Activated CD8-positive, alpha-beta T cell treated with anti-CD3 and anti-CD28 coated beads for 36 hours (primary cell): ENCODE measurements at regions of chr10 and their contacts with region 1.

Region 1: GRCh38 chr10:73495884-73496674 is at the start of gene PPP3CB:
- DNase-seq: peak; percentile 96
- ATAC-seq: peak; percentile 84
- H3K4me3 Mint-ChIP-seq: peak within 1 kb of the TSS; percentile 86
- H3K27ac Mint-ChIP-seq: peak within 1 kb of the TSS; percentile 97
- H3K4me1 Mint-ChIP-seq: peaks cover 41% of the 10 kb centered on the region
- H3K27me3 Mint-ChIP-seq: no peaks in the 10 kb centered on the region
- CTCF ChIP-seq: no peak
- total RNA-seq, gene PPP3CB: 35.8 to 36.5 TPM

Region 2: GRCh38 chr10:72344932-72345331 is 1151.1 kb before region 1 on chr10:
- CTCF ChIA-PET with region 1: no interaction called
- POLR2A ChIA-PET with region 1: no interaction called
- intact Hi-C with region 1: no loop called
- DNase-seq: peak; percentile 64
- ATAC-seq: peak; percentile 60
- H3K4me3 Mint-ChIP-seq: no peak overlapping the region
- H3K27ac Mint-ChIP-seq: peak overlapping the region; percentile 76
- H3K4me1 Mint-ChIP-seq: peaks cover 26% of the 10 kb centered on the region
- H3K27me3 Mint-ChIP-seq: no peaks in the 10 kb centered on the region
- CTCF ChIP-seq: no peak

Region 3: GRCh38 chr10:73182568-73182967 is 313.5 kb before region 1 on chr10:
- CTCF ChIA-PET with region 1: no interaction called
- POLR2A ChIA-PET with region 1: no interaction called
- intact Hi-C with region 1: no loop called
- DNase-seq: no peak
- ATAC-seq: no peak
- H3K4me3 Mint-ChIP-seq: no peak overlapping the region
- H3K27ac Mint-ChIP-seq: no peak overlapping the region
- H3K4me1 Mint-ChIP-seq: no peaks in the 10 kb centered on the region
- H3K27me3 Mint-ChIP-seq: no peaks in the 10 kb centered on the region
- CTCF ChIP-seq: no peak

Region 4: DNA sequence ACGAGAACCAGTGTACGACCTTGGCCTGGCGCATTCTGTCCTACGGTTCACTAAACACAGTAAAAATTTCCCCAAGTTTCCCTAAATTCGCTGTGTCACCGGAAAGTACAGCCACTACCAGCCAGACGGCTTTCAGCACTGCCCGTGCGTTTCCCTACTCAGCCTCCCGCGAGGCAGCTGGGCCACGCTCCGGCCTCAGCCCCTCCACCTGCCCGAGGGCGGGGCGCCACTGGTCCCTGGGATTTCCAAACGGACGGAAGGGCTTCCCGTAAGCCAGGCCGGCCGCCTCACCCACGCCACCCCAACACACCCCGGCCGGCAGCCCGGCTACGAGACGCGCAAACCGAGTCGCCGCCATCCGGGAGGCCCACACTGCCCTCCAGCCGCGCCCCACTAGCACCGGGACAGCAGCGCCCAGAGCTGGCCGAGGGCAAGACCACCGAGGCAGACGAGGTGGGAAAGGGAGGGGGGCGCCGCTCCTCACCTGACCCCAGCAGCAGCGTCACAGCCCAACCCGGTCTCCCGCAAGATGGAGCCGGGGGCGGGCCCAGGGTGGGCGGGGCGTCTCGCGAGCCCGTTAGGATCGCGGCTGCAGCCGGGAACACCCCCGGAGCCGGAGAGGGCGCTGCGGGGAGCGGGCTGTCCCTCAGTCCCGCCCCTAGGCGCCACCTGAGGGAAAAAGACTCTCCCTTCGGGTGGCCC is 82.4 kb before region 1 on chr10 and contains the start of gene ANXA7:
- CTCF ChIA-PET with region 1: no interaction called
- POLR2A ChIA-PET with region 1: interaction called, 14 read pairs
- intact Hi-C with region 1: no loop called
- DNase-seq: peak; percentile 97
- ATAC-seq: peak; percentile 96
- H3K4me3 Mint-ChIP-seq: peak within 1 kb of the TSS; percentile 92
- H3K27ac Mint-ChIP-seq: peak within 1 kb of the TSS; percentile 92
- H3K4me1 Mint-ChIP-seq: peaks cover 46% of the 10 kb centered on the region
- H3K27me3 Mint-ChIP-seq: peaks cover 2% of the 10 kb centered on the region
- CTCF ChIP-seq: no peak
- total RNA-seq, gene ANXA7: 101 to 103 TPM

Region 5: GRCh38 chr10:73522263-73522662 is 26.2 kb after region 1 on chr10:
- CTCF ChIA-PET with region 1: no interaction called
- POLR2A ChIA-PET with region 1: no interaction called
- intact Hi-C with region 1: no loop called
- DNase-seq: no peak
- ATAC-seq: no peak
- H3K4me3 Mint-ChIP-seq: no peak overlapping the region
- H3K27ac Mint-ChIP-seq: no peak overlapping the region
- H3K4me1 Mint-ChIP-seq: no peaks in the 10 kb centered on the region
- H3K27me3 Mint-ChIP-seq: no peaks in the 10 kb centered on the region
- CTCF ChIP-seq: no peak

Region 6: GRCh38 chr10:73601486-73601921 is 105.4 kb after region 1 on chr10:
- CTCF ChIA-PET with region 1: no interaction called
- POLR2A ChIA-PET with region 1: no interaction called
- intact Hi-C with region 1: no loop called
- DNase-seq: no peak
- ATAC-seq: no peak
- H3K4me3 Mint-ChIP-seq: no peak overlapping the region
- H3K27ac Mint-ChIP-seq: no peak overlapping the region
- H3K4me1 Mint-ChIP-seq: no peaks in the 10 kb centered on the region
- H3K27me3 Mint-ChIP-seq: no peaks in the 10 kb centered on the region
- CTCF ChIP-seq: no peak